ENCODE measurements at regions of chr11 and their contacts with region 1.

Region 1: GRCh38 chr11:7513234-7514098 is at the start of gene PPFIBP2:
- DNase-seq: peak; percentile 91
- ATAC-seq: peak; percentile 71
- H3K4me3 ChIP-seq: peak within 1 kb of the TSS; percentile 83 to 100 (median 97)
- H3K4me3 Mint-ChIP-seq: peak within 1 kb of the TSS; percentile 97
- H3K27ac ChIP-seq: peak within 1 kb of the TSS; percentile 100
- H3K27ac Mint-ChIP-seq: peak within 1 kb of the TSS; percentile 99
- H3K4me1 ChIP-seq: peaks cover 48 to 70% of the 10 kb centered on the region in 2 donors
- H3K4me1 Mint-ChIP-seq: peaks cover 39% of the 10 kb centered on the region
- H3K27me3 ChIP-seq: no peaks in the 10 kb centered on the region
- H3K27me3 Mint-ChIP-seq: no peaks in the 10 kb centered on the region
- CTCF ChIP-seq: peak; percentile 83
- total RNA-seq, gene PPFIBP2: 175 and 202 TPM in 2 replicates

Region 2: DNA sequence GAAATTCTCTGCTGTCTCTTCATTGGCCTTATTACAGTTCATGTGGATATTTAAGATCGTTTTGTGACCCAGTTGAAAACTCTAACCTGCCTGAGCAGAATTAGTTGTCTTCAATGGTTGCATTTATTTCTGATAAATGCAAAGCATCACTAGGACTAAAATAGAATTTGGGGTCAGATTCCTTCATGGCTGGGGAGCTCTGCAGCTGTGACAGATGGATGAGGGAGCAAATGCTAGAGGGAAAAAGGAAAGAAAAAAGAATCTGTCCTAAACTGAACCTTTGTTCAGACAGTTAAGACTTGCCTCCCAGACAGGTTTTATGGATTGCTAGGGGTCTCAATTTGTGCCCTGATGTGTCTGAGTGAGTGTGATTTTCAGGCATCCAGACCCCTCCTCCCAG is 148.8 kb before region 1 on chr11:
- CTCF ChIA-PET with region 1: no interaction called
- POLR2A ChIA-PET with region 1: no interaction called
- intact Hi-C with region 1: no loop called
- DNase-seq: no peak
- ATAC-seq: no peak
- H3K4me3 ChIP-seq: no peak overlapping the region
- H3K4me3 Mint-ChIP-seq: no peak overlapping the region
- H3K27ac ChIP-seq: no peak overlapping the region
- H3K27ac Mint-ChIP-seq: no peak overlapping the region
- H3K4me1 ChIP-seq: no peaks in the 10 kb centered on the region
- H3K4me1 Mint-ChIP-seq: no peaks in the 10 kb centered on the region
- H3K27me3 ChIP-seq: no peaks in the 10 kb centered on the region
- H3K27me3 Mint-ChIP-seq: no peaks in the 10 kb centered on the region
- CTCF ChIP-seq: no peak

Region 3: DNA sequence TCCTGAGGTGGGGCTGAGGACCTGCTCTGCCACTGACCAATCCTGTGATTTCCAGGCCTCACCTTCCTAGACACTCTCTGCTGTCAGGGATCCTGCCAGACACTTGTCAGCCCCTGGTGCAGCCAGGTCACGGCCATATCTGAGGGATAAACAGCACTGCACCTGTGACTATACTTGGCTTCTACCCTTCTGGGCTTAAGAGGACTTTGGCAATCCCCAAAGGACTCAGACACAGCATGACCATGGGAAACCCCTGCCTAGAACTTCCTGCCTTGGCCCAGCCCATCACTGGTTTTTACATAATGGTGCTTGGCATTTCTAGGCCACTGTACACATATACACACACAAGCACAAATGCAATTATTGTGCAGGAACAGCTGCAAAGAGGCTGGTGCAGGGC is 39.7 kb before region 1 on chr11:
- CTCF ChIA-PET with region 1: interaction called, 13 read pairs
- POLR2A ChIA-PET with region 1: no interaction called
- intact Hi-C with region 1: loop called (anchors 2 kb)
- DNase-seq: peak; percentile 76
- ATAC-seq: peak; percentile 98
- H3K4me3 ChIP-seq: no peak overlapping the region
- H3K4me3 Mint-ChIP-seq: peak overlapping the region; percentile 51
- H3K27ac ChIP-seq: peak overlapping the region; percentile 25 to 76
- H3K27ac Mint-ChIP-seq: peak overlapping the region; percentile 85
- H3K4me1 ChIP-seq: peaks cover 28 to 30% of the 10 kb centered on the region in 2 donors
- H3K4me1 Mint-ChIP-seq: peaks cover 36% of the 10 kb centered on the region
- H3K27me3 ChIP-seq: no peaks in the 10 kb centered on the region
- H3K27me3 Mint-ChIP-seq: no peaks in the 10 kb centered on the region
- CTCF ChIP-seq: no peak

Region 4: GRCh38 chr11:7533199-7534041 is 20.0 kb after region 1 on chr11:
- CTCF ChIA-PET with region 1: interaction called, 12 read pairs
- POLR2A ChIA-PET with region 1: no interaction called
- intact Hi-C with region 1: no loop called
- DNase-seq: peak; percentile 32
- ATAC-seq: no peak
- H3K4me3 ChIP-seq: no peak overlapping the region
- H3K4me3 Mint-ChIP-seq: peak overlapping the region; percentile 46
- H3K27ac ChIP-seq: peak overlapping the region in 1 of 2 donors; percentile 48
- H3K27ac Mint-ChIP-seq: peak overlapping the region; percentile 27
- H3K4me1 ChIP-seq: peaks cover 32 to 47% of the 10 kb centered on the region in 2 donors
- H3K4me1 Mint-ChIP-seq: peaks cover 89% of the 10 kb centered on the region
- H3K27me3 ChIP-seq: no peaks in the 10 kb centered on the region
- H3K27me3 Mint-ChIP-seq: no peaks in the 10 kb centered on the region
- CTCF ChIP-seq: no peak

Region 5: GRCh38 chr11:7630002-7630401 is 116.5 kb after region 1 on chr11:
- CTCF ChIA-PET with region 1: no interaction called
- POLR2A ChIA-PET with region 1: no interaction called
- intact Hi-C with region 1: no loop called
- DNase-seq: no peak
- ATAC-seq: no peak
- H3K4me3 ChIP-seq: no peak overlapping the region
- H3K4me3 Mint-ChIP-seq: no peak overlapping the region
- H3K27ac ChIP-seq: no peak overlapping the region
- H3K27ac Mint-ChIP-seq: no peak overlapping the region
- H3K4me1 ChIP-seq: no peaks in the 10 kb centered on the region
- H3K4me1 Mint-ChIP-seq: no peaks in the 10 kb centered on the region
- H3K27me3 ChIP-seq: no peaks in the 10 kb centered on the region
- H3K27me3 Mint-ChIP-seq: no peaks in the 10 kb centered on the region
- CTCF ChIP-seq: no peak

Region 6: GRCh38 chr11:7657306-7658025 is 144.0 kb after region 1 on chr11:
- CTCF ChIA-PET with region 1: interaction called, 11 read pairs
- POLR2A ChIA-PET with region 1: no interaction called
- intact Hi-C with region 1: no loop called
- DNase-seq: peak; percentile 41
- ATAC-seq: peak; percentile 39
- H3K4me3 ChIP-seq: no peak overlapping the region
- H3K4me3 Mint-ChIP-seq: no peak overlapping the region
- H3K27ac ChIP-seq: no peak overlapping the region
- H3K27ac Mint-ChIP-seq: no peak overlapping the region
- H3K4me1 ChIP-seq: no peaks in the 10 kb centered on the region
- H3K4me1 Mint-ChIP-seq: no peaks in the 10 kb centered on the region
- H3K27me3 ChIP-seq: no peaks in the 10 kb centered on the region
- H3K27me3 Mint-ChIP-seq: no peaks in the 10 kb centered on the region
- CTCF ChIP-seq: no peak

Region 7: GRCh38 chr11:7986768-7987559 is 473.5 kb after region 1 on chr11 and contains the start of gene EIF3F:
- CTCF ChIA-PET with region 1: no interaction called
- POLR2A ChIA-PET with region 1: no interaction called
- intact Hi-C with region 1: loop called (anchors 5 kb)
- DNase-seq: peak; percentile 98
- ATAC-seq: peak; percentile 97
- H3K4me3 ChIP-seq: peak within 1 kb of the TSS; percentile 58 to 83 (median 63)
- H3K4me3 Mint-ChIP-seq: peak within 1 kb of the TSS; percentile 93
- H3K27ac ChIP-seq: peak within 1 kb of the TSS; percentile 56 to 86
- H3K27ac Mint-ChIP-seq: peak within 1 kb of the TSS; percentile 94
- H3K4me1 ChIP-seq: peaks cover 24 to 26% of the 10 kb centered on the region in 2 donors
- H3K4me1 Mint-ChIP-seq: peaks cover 37% of the 10 kb centered on the region
- H3K27me3 ChIP-seq: no peaks in the 10 kb centered on the region
- H3K27me3 Mint-ChIP-seq: no peaks in the 10 kb centered on the region
- CTCF ChIP-seq: peak; percentile 85
- total RNA-seq, gene EIF3F: 316 and 330 TPM in 2 replicates